Activated T-helper 1 cell treated with anti-CD3 and anti-CD28 coated beads, Interleukin-12 subunit alpha, Interleukin-12 subunit beta, Interleukin-2, Interleukin-4 antibody, amounts not matched to agents 30 ng/mL and 10 ng/mL and 1 ng/mL, durations not matched to agents 14 hours and 24 hours and 36 hours (primary cell): ENCODE measurements at regions of chr2 and their contacts with region 1.

Region 1: DNA sequence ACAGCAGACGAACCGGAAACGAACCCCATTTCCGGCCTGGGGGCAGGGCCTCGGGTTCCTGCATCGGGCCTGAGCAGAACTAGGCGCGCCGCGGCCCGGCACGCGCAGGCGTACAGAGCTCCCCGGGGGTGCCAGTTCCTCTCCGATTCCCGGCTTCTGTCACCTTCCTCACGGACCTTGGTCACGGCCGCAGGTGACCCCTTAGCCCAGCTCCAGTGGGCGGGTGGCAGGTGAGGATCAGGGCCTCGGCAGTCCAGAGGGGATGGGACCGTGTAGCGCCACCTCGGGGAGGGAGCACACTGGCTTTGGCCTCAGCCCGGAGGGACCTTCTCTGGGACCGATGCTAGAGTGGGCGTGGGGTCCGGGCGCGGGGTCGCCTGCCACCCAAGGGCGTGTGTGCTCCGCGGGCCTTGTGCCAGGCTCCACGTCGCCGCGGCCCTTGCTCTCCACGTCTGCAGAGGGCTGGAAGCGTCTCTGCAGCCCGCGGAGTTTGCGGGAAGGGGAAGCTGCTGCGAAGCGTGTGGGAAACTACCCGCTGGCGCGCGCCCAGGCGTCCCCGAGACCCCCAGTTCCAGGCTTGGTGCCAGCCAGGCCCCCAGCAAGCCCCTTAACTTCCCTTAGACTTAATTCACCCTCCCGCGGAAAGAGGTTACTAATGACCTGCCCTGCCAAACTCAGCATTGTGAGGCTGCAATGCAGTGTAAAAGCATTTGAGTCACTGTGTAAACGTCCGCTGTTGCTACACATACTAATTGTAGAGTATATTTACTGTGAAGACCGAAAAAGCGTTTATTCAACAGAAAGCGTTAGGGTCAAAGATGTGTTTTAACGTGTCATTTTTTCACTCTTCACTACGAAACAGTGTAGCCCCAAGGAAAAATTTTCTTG is at the start of gene TRAPPC12:
- DNase-seq: peak; percentile 91
- H3K4me3 Mint-ChIP-seq: peak within 1 kb of the TSS; percentile 99
- H3K27ac Mint-ChIP-seq: peak within 1 kb of the TSS; percentile 98
- H3K4me1 Mint-ChIP-seq: peaks cover 48% of the 10 kb centered on the region
- H3K27me3 Mint-ChIP-seq: no peaks in the 10 kb centered on the region
- total RNA-seq, gene TRAPPC12: 87.3 and 101 TPM in 2 replicates

Region 2: GRCh38 chr2:3242747-3243369 is 137.0 kb before region 1 on chr2:
- intact Hi-C with region 1: loop called (anchors 5 kb)
- DNase-seq: peak; percentile 16
- H3K4me3 Mint-ChIP-seq: no peak overlapping the region
- H3K27ac Mint-ChIP-seq: no peak overlapping the region
- H3K4me1 Mint-ChIP-seq: peaks cover 25% of the 10 kb centered on the region
- H3K27me3 Mint-ChIP-seq: no peaks in the 10 kb centered on the region

Region 3: DNA sequence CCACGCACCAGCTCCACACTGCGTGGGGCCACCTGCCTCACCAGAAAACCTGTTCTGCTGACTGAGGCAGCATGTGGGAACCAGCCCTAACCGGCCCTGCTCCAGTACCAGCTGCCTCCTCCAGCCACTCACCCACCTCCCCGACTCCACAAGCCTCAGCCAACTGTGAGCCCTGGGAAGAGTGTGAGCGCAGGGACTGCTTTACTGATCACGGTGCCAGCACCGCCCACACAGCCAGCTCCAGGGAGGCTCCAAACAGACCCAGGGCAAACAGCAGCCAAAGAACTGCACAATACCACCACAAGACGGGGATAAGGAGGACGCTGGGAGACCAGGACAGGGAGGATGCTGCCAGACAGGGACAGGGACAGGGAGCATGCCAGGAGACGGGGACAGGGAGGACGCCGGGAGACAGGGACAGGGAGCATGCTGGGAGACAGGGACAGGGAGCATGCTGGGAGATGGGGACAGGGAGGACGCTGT is 30.6 kb before region 1 on chr2:
- intact Hi-C with region 1: no loop called
- DNase-seq: no peak
- H3K4me3 Mint-ChIP-seq: no peak overlapping the region
- H3K27ac Mint-ChIP-seq: no peak overlapping the region
- H3K4me1 Mint-ChIP-seq: peaks cover 4% of the 10 kb centered on the region
- H3K27me3 Mint-ChIP-seq: no peaks in the 10 kb centered on the region

Region 4: DNA sequence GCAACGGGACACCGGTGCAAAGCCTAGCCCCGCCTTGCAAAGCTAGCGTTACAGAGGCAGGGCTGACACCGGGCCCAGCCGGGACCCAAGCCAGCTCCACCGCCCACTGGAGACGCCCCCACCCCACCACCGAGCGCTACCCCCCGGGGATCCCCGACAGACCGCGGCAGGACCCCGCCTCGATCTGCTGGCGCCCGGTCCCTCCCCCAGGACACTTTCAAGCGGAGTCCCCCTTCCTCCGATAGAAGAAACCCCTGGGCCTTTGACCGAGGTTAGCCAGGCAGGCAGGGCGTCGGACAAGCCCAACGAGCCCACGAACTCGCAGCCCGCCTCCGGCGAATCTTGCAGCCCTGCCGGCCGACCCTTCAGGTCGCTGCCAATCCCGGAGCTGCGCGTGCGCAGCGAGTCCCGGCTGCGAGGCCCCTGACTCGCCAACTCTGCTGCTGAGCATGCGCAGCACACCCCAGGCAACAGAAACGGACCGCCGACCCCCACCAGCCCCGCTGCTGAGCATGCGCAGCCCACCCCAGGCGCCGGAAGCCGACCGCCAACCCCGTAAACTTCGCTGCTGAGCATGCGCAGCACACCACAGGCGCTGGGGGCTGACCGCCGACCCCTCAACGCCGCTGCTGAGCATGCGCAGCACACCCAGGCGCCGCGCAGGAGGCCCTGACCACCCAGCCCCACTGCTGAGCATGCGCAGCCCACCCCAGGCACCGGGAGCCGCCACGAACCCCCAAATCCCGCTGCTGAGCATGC is 138.8 kb after region 1 on chr2:
- intact Hi-C with region 1: loop called (anchors 1 kb)
- DNase-seq: peak; percentile 97
- H3K4me3 Mint-ChIP-seq: peak overlapping the region; percentile 94
- H3K27ac Mint-ChIP-seq: peak overlapping the region; percentile 91
- H3K4me1 Mint-ChIP-seq: peaks cover 50% of the 10 kb centered on the region
- H3K27me3 Mint-ChIP-seq: peaks cover 3% of the 10 kb centered on the region

Region 5: GRCh38 chr2:3575534-3576262 is 195.8 kb after region 1 on chr2:
- intact Hi-C with region 1: loop called (anchors 1 kb)
- DNase-seq: peak; percentile 17
- H3K4me3 Mint-ChIP-seq: peak overlapping the region; percentile 99
- H3K27ac Mint-ChIP-seq: peak overlapping the region; percentile 91
- H3K4me1 Mint-ChIP-seq: peaks cover 54% of the 10 kb centered on the region
- H3K27me3 Mint-ChIP-seq: peaks cover 1% of the 10 kb centered on the region

Region 6: GRCh38 chr2:3930246-3930645 is 550.4 kb after region 1 on chr2:
- intact Hi-C with region 1: no loop called
- DNase-seq: no peak
- H3K4me3 Mint-ChIP-seq: no peak overlapping the region
- H3K27ac Mint-ChIP-seq: no peak overlapping the region
- H3K4me1 Mint-ChIP-seq: no peaks in the 10 kb centered on the region
- H3K27me3 Mint-ChIP-seq: no peaks in the 10 kb centered on the region